ENCODE measurements at regions of chr16 and their contacts with region 1.

Region 1: GRCh38 chr16:69123910-69124309 is 8.5 kb downstream of the CHTF8 start:
- DNase-seq: peak; percentile 35 to 60 (median 59)
- H3K4me3 ChIP-seq: no peak overlapping the region
- H3K4me3 Mint-ChIP-seq: no peak overlapping the region
- H3K27ac ChIP-seq: no peak overlapping the region
- H3K27ac Mint-ChIP-seq: no peak overlapping the region
- H3K4me1 ChIP-seq: no peaks in the 10 kb centered on the region
- H3K4me1 Mint-ChIP-seq: peaks cover 7% of the 10 kb centered on the region
- H3K27me3 ChIP-seq: no peaks in the 10 kb centered on the region
- H3K27me3 Mint-ChIP-seq: no peaks in the 10 kb centered on the region
- CTCF ChIP-seq: peak; percentile 74

Region 2: GRCh38 chr16:68528686-68529379 is 595.1 kb before region 1 on chr16:
- intact Hi-C with region 1: loop called in 1 of 2 experiments (anchors 5 kb)
- DNase-seq: peak; percentile 68 to 77 (median 74)
- H3K4me3 ChIP-seq: no peak overlapping the region
- H3K4me3 Mint-ChIP-seq: peak overlapping the region in 1 of 2 donors; percentile 91
- H3K27ac ChIP-seq: no peak overlapping the region
- H3K27ac Mint-ChIP-seq: no peak overlapping the region
- H3K4me1 ChIP-seq: peaks cover 18 to 20% of the 10 kb centered on the region in 2 donors
- H3K4me1 Mint-ChIP-seq: peaks cover 17% of the 10 kb centered on the region
- H3K27me3 ChIP-seq: peaks cover 6 to 27% of the 10 kb centered on the region in 2 donors
- H3K27me3 Mint-ChIP-seq: peaks cover 10 to 38% (median 35%) of the 10 kb centered on the region in 3 donors
- CTCF ChIP-seq: peak; percentile 93

Region 3: GRCh38 chr16:68704232-68704867 is 419.6 kb before region 1 on chr16:
- intact Hi-C with region 1: loop called (anchors 10 kb)
- DNase-seq: peak; percentile 34 to 74 (median 39)
- H3K4me3 ChIP-seq: no peak overlapping the region
- H3K4me3 Mint-ChIP-seq: peak overlapping the region in 1 of 2 donors; percentile 46
- H3K27ac ChIP-seq: no peak overlapping the region
- H3K27ac Mint-ChIP-seq: no peak overlapping the region
- H3K4me1 ChIP-seq: peaks cover 23 to 27% of the 10 kb centered on the region in 2 donors
- H3K4me1 Mint-ChIP-seq: peaks cover 16% of the 10 kb centered on the region
- H3K27me3 ChIP-seq: no peaks in the 10 kb centered on the region
- H3K27me3 Mint-ChIP-seq: peaks cover 3 to 10% (median 8%) of the 10 kb centered on the region in 3 donors
- CTCF ChIP-seq: peak; percentile 77

Measured in CD14-positive monocyte (primary cell).